Activated B cell treated with CpG ODN at 0.5 μM for 24 hours (primary cell): ENCODE measurements at regions of chr20 and their contacts with region 1.

Region 1: DNA sequence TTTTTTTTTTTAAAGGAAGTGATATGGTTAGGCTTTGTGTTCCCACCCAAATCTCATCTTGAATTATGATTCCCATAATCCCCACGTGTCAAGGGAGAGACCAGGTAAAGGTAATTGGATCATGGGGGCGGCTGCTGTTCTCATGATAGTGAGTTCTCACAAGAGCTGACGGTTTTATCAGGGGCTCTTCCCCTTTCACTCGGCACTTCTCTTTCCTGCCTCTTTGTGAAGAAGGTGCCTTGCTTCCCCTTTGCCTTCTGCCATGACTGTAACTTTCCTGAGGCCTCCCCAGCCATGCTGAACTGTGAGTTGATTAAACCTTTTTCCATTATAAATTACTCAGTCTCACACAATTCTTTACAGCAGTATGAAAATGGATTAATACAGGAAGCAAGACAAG is 64.3 kb downstream of the ZFP64 start:
- DNase-seq: no peak
- ATAC-seq: no peak
- H3K4me3 Mint-ChIP-seq: no peak overlapping the region
- H3K27ac Mint-ChIP-seq: no peak overlapping the region
- H3K4me1 Mint-ChIP-seq: no peaks in the 10 kb centered on the region
- H3K27me3 Mint-ChIP-seq: no peaks in the 10 kb centered on the region
- CTCF ChIP-seq: no peak

Region 2: DNA sequence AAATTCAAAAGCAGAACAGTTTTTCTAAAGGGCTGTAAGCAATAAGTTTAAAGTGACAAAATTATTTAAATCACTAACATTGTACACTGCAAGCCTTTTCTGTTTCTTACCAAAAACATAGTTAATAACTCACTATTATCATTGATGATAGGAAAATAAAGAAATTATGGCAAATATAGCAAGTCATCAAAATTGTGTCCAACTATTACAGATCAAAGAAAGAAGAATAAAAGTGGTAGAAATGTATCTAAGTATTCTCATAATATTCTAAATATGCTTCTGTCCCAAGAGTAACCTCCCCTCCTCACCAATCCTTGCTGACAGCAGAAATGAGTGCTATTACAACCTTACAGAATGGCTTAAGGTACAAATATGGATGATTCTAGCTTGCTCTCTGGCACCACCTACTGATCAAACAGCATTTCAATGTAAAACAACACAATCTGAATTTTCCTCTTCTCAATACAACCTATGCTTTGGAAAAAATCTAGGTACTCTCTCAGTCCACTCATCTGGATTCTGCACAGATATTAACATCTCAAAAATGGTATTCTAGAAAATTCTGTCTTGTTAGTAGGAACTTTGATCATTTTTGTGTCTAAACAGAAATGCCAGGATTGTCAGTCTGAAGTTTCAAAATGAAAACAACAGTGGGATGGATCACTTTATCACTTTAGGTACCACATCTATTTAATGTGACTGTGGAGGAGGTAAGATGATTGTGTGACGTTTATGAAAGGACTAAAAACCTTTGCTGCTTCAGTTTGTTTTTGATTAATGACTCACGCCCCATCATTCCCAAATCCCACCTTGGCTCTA is 23.3 kb after region 1 on chr20:
- CTCF ChIA-PET with region 1: interaction called, 6 read pairs
- POLR2A ChIA-PET with region 1: no interaction called
- intact Hi-C with region 1: loop called (anchors 1 kb)
- DNase-seq: no peak
- ATAC-seq: no peak
- H3K4me3 Mint-ChIP-seq: no peak overlapping the region
- H3K27ac Mint-ChIP-seq: no peak overlapping the region
- H3K4me1 Mint-ChIP-seq: no peaks in the 10 kb centered on the region
- H3K27me3 Mint-ChIP-seq: no peaks in the 10 kb centered on the region
- CTCF ChIP-seq: peak; percentile 36

Region 3: DNA sequence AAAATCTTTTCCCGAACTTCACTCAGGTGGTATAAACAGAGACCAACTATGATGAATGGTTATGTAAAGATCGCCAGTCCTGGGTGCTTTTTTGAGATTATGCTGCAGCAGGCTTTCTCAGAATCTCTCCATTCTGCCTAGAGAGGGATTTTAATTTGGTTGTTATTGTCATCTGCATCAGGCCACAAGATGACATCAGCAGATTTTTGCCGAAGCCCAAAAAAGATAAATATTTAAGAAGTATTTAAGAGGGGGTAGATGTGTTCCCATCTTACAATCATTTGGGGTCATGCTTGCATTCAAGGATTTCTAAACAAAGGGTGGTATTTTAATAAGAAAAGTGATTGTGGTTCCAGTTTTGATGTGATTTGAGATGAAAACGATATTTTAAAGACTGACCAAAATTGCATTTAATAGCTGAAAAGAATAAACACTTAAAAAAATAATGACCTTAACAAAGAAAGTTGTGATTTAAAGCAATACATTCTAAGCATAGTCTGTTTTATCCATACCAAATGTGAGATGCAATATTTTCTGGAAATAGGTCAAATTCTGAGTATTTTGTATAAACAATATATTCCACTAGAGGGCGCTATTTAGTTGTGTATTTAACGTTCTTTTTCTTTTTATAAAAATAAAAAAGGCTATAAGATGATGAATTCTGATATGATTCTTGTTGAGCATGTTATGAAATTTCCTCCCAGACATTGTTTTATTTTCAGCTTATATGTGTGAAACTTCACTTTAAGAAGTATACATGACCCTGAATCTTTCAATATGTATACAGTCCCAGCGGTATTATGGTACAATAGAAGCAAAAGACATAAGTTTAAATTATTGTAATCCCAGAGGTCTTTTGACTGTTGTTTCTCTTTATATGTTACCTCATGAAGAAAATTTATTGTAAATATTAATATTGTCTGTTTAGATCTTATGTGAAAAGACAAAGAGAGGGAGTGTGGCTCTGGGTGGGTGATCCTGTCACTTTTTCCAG is 115.2 kb after region 1 on chr20:
- CTCF ChIA-PET with region 1: interaction called, 3 read pairs
- POLR2A ChIA-PET with region 1: no interaction called
- intact Hi-C with region 1: loop called (anchors 2 kb)
- DNase-seq: no peak
- ATAC-seq: no peak
- H3K4me3 Mint-ChIP-seq: no peak overlapping the region
- H3K27ac Mint-ChIP-seq: no peak overlapping the region
- H3K4me1 Mint-ChIP-seq: no peaks in the 10 kb centered on the region
- H3K27me3 Mint-ChIP-seq: peaks cover 10% of the 10 kb centered on the region
- CTCF ChIP-seq: peak; percentile 73